A673 (cell line): ENCODE measurements at regions of chr12 and their contacts with region 1.

Region 1: DNA sequence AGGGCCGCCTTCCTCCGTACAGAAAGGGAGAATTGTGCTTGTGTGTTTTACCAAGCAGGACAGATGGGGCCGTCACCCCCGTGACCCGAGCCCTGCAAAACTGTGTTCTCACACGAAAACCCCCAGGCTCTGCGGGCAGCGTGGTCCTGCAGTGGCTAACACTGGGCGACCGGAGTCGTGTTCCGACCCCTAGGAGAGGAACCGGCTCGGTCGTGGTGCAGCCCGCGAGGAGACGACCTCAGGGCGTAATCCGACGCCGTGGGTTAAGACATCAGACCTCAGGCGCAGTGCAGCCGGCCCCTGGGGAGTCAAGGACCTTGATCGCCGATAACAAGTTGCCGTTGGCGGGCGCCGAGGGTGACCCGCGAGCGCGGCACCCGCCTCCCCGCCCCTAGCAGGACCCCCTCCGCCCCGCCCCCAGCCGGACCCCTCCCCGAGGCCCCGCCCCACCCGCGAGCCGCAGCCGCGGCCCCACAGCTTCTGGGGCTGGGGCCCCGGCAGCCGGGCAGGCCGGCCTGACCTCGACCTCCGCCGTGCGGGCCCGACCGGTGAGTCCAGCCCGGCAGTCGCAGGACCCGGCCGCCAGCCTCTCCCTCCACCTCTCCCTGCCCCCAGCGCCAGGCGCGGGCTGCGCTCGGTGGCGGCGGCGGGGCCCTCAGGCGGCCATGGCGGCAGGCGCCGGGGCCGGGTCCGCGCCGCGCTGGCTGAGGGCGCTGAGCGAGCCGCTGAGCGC is at the start of gene CHPT1:
- DNase-seq: peak; percentile 65
- H3K4me3 ChIP-seq: peak within 1 kb of the TSS; percentile 89
- H3K27ac ChIP-seq: peak within 1 kb of the TSS; percentile 65
- H3K4me1 ChIP-seq: no peaks in the 10 kb centered on the region
- H3K27me3 ChIP-seq: no peaks in the 10 kb centered on the region
- CTCF ChIP-seq: no peak
- total RNA-seq, gene CHPT1: 30.2 and 31.6 TPM in 2 replicates

Region 2: GRCh38 chr12:101209319-101210302 is 487.8 kb before region 1 on chr12 and contains the start of gene SLC5A8:
- CTCF ChIA-PET with region 1: no interaction called
- POLR2A ChIA-PET with region 1: no interaction called
- intact Hi-C with region 1: no loop called
- DNase-seq: peak; percentile 3
- H3K4me3 ChIP-seq: peak within 1 kb of the TSS; percentile 34
- H3K27ac ChIP-seq: no peak within 1 kb of the TSS
- H3K4me1 ChIP-seq: no peaks in the 10 kb centered on the region
- H3K27me3 ChIP-seq: peaks cover 39% of the 10 kb centered on the region
- CTCF ChIP-seq: no peak
- total RNA-seq, gene SLC5A8: not detected in 2 replicates

Region 3: DNA sequence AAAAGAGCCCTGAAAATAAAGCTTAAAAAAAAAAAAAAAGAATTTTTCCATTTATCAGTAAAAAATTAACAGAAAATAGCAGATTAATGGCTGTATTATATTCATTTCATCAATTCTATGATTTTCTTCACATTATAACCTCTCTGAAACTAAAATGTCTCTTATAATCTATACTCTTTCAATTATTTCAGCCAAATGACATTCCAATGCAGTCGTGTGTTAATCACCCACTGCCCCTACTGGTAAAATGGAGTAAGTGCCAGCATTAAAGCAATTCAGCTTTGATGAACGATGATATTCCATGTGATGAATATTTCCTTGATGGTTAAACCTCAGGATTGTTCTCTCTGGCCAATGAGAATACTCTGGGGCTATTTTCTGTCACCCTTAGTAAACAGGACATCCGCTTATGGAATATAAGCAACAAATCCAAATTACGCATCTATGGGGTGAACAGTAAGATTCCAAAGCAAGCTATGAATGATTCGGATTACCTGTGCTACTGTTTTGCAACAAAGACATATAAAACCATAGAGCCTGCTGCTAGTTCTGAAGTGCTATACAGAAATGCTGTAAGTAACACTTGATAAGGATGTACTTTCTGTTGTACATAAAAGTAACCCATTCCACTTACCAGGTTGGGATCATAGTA is 62.2 kb after region 1 on chr12:
- CTCF ChIA-PET with region 1: no interaction called
- POLR2A ChIA-PET with region 1: no interaction called
- intact Hi-C with region 1: loop called (anchors 2 kb)
- DNase-seq: peak; percentile 57
- H3K4me3 ChIP-seq: no peak overlapping the region
- H3K27ac ChIP-seq: no peak overlapping the region
- H3K4me1 ChIP-seq: no peaks in the 10 kb centered on the region
- H3K27me3 ChIP-seq: no peaks in the 10 kb centered on the region
- CTCF ChIP-seq: peak; percentile 84